ENCODE measurements at regions of chr16 and their contacts with region 1.

Region 1: GRCh38 chr16:86016201-86016871 is 117.4 kb downstream of the IRF8 start:
- DNase-seq: peak in 1 of 2 donors; percentile 80
- H3K4me3 ChIP-seq: no peak overlapping the region
- CTCF ChIP-seq: peak in 1 of 3 donors; percentile 36
- POLR2A ChIP-seq: no peak

Region 2: GRCh38 chr16:85821441-85822135 is 194.7 kb before region 1 on chr16:
- intact Hi-C with region 1: loop called (anchors 2 kb)
- DNase-seq: peak; percentile 64 to 95
- H3K4me3 ChIP-seq: no peak overlapping the region
- CTCF ChIP-seq: peak in 1 of 3 donors; percentile 77
- POLR2A ChIP-seq: no peak

Region 3: GRCh38 chr16:85916141-85916890 is 100.0 kb before region 1 on chr16:
- intact Hi-C with region 1: no loop called
- DNase-seq: no peak
- H3K4me3 ChIP-seq: no peak overlapping the region
- CTCF ChIP-seq: no peak
- POLR2A ChIP-seq: no peak

Region 4: DNA sequence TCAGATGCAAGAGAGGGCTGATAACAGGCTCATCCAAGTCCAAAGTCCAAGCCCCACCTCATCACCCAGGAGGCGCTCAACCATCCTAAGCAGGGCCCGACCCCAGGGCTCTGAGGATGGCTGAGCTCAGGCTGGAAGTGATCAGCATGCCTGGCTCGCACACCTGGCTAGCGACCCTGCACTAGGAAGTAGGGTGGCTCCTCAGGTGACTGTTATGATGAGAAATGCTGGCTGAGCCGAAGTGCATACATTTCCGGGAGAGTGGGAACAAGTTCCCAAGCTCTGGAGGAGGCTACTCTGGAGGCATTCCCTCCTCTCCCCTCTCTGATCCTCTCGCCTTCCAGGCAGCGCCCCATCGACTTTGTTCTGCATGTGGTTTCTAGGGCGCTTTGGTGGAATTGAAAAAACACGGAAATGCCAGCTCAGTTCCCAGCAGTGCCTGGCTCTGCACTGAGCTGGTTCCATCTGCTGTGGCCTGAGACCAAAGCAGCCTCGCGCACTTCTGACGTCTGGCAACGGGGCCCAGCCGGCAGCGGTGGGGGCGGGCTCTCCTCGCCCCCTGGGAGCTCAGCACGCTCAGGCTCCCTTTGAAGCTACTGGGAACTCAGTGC is 12.9 kb after region 1 on chr16:
- intact Hi-C with region 1: no loop called
- DNase-seq: peak in 1 of 2 donors; percentile 84
- H3K4me3 ChIP-seq: no peak overlapping the region
- CTCF ChIP-seq: no peak
- POLR2A ChIP-seq: no peak

Measured in lower leg skin (tissue), 4 donors.